HAP-1 (cell line): ENCODE measurements at regions of chrX and their contacts with region 1.

Region 1: DNA sequence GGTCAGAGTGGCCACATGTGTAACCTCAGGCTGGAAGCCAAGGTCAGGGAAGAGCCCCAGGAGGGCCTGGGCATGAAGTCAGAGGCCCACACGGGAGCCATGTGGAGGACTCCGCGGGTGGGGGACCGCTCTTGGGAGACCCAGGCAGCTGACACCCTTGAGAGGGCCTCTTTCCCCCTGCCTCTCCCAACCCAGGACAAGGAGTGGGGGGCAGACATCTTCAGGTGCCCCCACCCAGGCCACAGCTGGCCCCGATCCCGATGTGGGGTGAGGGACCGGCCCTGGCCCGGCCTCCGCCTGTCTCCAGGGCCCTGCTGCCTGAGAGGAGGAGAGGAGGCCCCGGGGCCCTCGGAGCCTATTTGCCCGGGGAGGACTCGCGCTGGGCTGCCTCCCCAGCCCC is 3.1 kb downstream of the PNMA6A start:
- DNase-seq: no peak
- H3K4me3 ChIP-seq: no peak overlapping the region
- H3K4me1 ChIP-seq: no peaks in the 10 kb centered on the region
- H3K27me3 ChIP-seq: no peaks in the 10 kb centered on the region

Region 2: DNA sequence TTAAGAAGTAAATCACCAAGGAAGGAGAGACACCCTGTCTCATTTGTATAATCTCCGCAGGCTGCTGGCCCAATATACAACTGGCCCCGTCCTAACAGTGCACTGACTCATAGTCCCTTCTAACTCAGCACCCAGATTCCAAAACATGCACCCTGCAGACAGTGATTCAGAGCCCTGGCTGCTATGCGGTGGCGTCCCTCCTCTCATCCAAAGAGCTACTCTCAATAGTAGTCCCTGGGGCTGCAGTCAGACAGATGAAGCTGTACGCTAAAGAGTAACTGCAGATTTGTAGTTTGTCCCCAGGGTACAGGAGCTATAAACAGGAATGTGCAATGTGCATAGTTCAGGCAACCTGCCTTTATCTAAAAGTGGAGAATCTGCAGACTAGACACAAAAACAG is 647.2 kb before region 1 on chrX:
- in situ Hi-C with region 1: no loop called
- DNase-seq: no peak
- H3K4me3 ChIP-seq: no peak overlapping the region
- H3K4me1 ChIP-seq: no peaks in the 10 kb centered on the region
- H3K27me3 ChIP-seq: no peaks in the 10 kb centered on the region

Region 3: GRCh38 chrX:152958524-152959465 is 116.6 kb before region 1 on chrX:
- in situ Hi-C with region 1: no loop called
- DNase-seq: peak; percentile 86 to 96
- H3K4me3 ChIP-seq: no peak overlapping the region
- H3K4me1 ChIP-seq: peaks cover 4% of the 10 kb centered on the region; the same call in 1 of the 2 replicates
- H3K27me3 ChIP-seq: no peaks in the 10 kb centered on the region

Region 4: GRCh38 chrX:152992115-152992514 is 83.3 kb before region 1 on chrX:
- in situ Hi-C with region 1: no loop called
- DNase-seq: no peak
- H3K4me3 ChIP-seq: no peak overlapping the region
- H3K4me1 ChIP-seq: no peaks in the 10 kb centered on the region
- H3K27me3 ChIP-seq: no peaks in the 10 kb centered on the region

Region 5: DNA sequence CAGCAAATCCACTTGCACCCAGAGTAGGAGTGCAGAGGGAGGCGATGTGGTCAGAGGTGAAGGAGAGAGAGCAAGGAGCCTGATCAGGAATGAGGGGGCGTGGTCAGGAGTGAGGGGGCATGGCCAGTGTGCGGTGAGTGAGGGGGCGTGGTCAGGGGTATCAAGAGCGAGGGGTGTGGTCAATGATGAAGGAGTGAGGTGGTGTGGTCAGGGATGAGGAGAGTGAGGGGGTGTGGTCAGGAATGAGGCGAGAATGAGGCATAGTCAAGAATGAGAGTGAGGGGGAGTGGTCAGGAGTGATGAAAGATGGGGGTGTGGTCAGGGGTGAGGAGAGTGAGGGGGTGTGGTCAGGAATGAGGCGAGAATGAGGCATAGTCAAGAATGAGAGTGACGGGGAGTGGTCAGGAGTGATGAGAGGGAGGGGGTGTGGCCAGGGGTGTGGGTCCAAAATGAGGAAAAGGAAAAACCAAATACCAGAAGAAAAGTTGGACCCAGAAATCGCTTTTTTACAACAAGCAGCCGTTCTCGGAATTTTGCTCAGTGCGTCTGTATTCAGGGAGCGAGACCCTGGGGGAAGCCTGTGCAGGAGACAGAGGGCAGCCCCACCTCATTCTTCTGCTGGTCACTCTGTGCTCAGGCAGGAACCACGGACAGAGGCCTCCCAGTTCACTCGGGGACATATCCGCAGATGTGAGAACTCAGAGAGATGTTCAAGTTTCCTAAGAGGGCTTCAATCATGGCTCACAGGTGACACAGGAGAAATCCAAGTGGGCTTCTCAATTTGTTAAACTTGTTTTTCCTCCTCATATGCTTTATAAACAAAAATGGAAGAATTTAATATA is 151.2 kb after region 1 on chrX:
- in situ Hi-C with region 1: loop called (anchors 25 kb)
- DNase-seq: peak; percentile 13 to 82
- H3K4me3 ChIP-seq: no peak overlapping the region
- H3K4me1 ChIP-seq: no peaks in the 10 kb centered on the region
- H3K27me3 ChIP-seq: peaks cover 16% of the 10 kb centered on the region

Region 6: GRCh38 chrX:153724252-153725040 is 649.1 kb after region 1 on chrX and contains the starts of genes ABCD1 and BCAP31:
- in situ Hi-C with region 1: no loop called
- DNase-seq: peak; percentile 89 to 96
- H3K4me3 ChIP-seq: peak within 1 kb of the TSS; percentile 74
- H3K4me1 ChIP-seq: peaks cover 29% of the 10 kb centered on the region
- H3K27me3 ChIP-seq: no peaks in the 10 kb centered on the region